Sigmoid colon (tissue), 7 donors: ENCODE measurements at regions of chr5 and their contacts with region 1.

Region 1: DNA sequence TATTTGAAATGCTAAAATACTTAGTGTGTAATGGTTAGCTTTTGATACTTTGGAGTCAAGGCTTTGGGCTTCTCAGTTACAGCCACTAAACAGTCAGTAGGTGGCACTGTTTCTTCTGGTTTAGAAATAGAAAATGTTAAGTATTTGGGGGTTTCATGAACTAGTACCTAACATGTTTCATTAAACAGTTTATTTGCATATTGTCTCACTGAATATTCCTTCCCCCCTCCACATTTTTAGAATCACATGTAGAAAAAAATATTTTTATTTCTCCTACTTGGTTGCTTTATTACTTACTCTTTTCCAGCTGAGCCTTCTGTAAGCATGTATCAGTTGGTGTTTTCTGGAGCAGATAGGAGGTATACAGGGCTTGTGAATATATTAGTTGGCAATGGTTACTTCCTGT is 48.0 kb downstream of the IPO11 start:
- DNase-seq: no peak
- H3K4me3 ChIP-seq: no peak overlapping the region
- H3K27ac ChIP-seq: no peak overlapping the region
- H3K4me1 ChIP-seq: peaks cover 0 to 7% (median under 1%) of the 10 kb centered on the region in 4 donors
- H3K27me3 ChIP-seq: no peaks in the 10 kb centered on the region
- CTCF ChIP-seq: peak; percentile 28 to 72 (median 45)
- EP300 ChIP-seq: no peak
- POLR2A ChIP-seq: no peak

Region 2: GRCh38 chr5:62779010-62779422 is 318.4 kb after region 1 on chr5:
- intact Hi-C with region 1: loop called (anchors 2 kb)
- DNase-seq: no peak
- H3K4me3 ChIP-seq: no peak overlapping the region
- H3K27ac ChIP-seq: no peak overlapping the region
- H3K4me1 ChIP-seq: no peaks in the 10 kb centered on the region
- H3K27me3 ChIP-seq: no peaks in the 10 kb centered on the region
- CTCF ChIP-seq: peak; percentile 34 to 74 (median 40)
- EP300 ChIP-seq: no peak
- POLR2A ChIP-seq: no peak